ENCODE measurements at regions of chr3 and their contacts with region 1.

Region 1: GRCh38 chr3:152205097-152205593 is 63.6 kb upstream of the MBNL1 start:
- DNase-seq: peak in 5 of 9 donors; percentile 23 to 52 (median 41)
- ATAC-seq: peak; percentile 75
- H3K4me3 ChIP-seq: peak overlapping the region; percentile 65
- H3K4me3 Mint-ChIP-seq: peak overlapping the region; percentile 88 to 100 (median 94)
- H3K27ac ChIP-seq: peak overlapping the region; percentile 84
- H3K27ac Mint-ChIP-seq: peak overlapping the region; percentile 91 to 100 (median 96)
- H3K4me1 ChIP-seq: peaks cover 35 to 49% of the 10 kb centered on the region in 2 donors
- H3K4me1 Mint-ChIP-seq: peaks cover 46 to 84% (median 71%) of the 10 kb centered on the region in 7 donors
- H3K27me3 ChIP-seq: no peaks in the 10 kb centered on the region
- H3K27me3 Mint-ChIP-seq: no peaks in the 10 kb centered on the region

Region 2: GRCh38 chr3:151168269-151169094 is 1036.7 kb before region 1 on chr3:
- CTCF ChIA-PET with region 1: no interaction called
- POLR2A ChIA-PET with region 1: no interaction called
- intact Hi-C with region 1: no loop called
- DNase-seq: peak; percentile 55 to 79 (median 68)
- ATAC-seq: peak; percentile 77
- H3K4me3 ChIP-seq: no peak overlapping the region
- H3K4me3 Mint-ChIP-seq: no peak overlapping the region
- H3K27ac ChIP-seq: no peak overlapping the region
- H3K27ac Mint-ChIP-seq: peak overlapping the region in 1 of 9 donors; percentile 31
- H3K4me1 ChIP-seq: peaks cover 24 to 30% of the 10 kb centered on the region in 2 donors
- H3K4me1 Mint-ChIP-seq: peaks cover 28 to 48% (median 40%) of the 10 kb centered on the region in 7 donors
- H3K27me3 ChIP-seq: no peaks in the 10 kb centered on the region
- H3K27me3 Mint-ChIP-seq: no peaks in the 10 kb centered on the region

Region 3: DNA sequence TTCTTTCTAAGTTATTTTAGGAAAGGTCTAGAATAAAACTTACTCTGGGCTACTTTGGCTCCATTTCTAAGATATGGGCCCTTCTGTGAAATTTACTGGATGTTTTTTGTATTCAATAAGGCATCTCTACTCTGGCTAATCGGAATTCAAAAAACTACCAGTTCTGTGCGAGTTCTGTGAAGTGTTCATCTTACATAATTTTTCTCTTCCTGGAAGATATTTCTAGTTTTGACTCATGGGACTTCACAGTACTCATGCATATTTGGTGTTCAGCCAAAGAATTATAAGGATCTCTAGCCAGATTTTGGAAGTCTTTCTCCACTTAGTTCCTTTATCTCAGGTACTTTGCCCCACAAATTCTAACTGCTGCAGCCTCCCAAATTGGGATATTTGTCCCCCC is 17.2 kb after region 1 on chr3:
- CTCF ChIA-PET with region 1: interaction called, 7 read pairs
- POLR2A ChIA-PET with region 1: interaction called, 166 read pairs
- intact Hi-C with region 1: loop called (anchors 1 to 2 kb)
- DNase-seq: peak in 1 of 9 donors; percentile 14
- ATAC-seq: peak; percentile 57
- H3K4me3 ChIP-seq: peak overlapping the region; percentile 3
- H3K4me3 Mint-ChIP-seq: peak overlapping the region; percentile 48 to 86 (median 74)
- H3K27ac ChIP-seq: peak overlapping the region; percentile 67
- H3K27ac Mint-ChIP-seq: peak overlapping the region; percentile 65 to 99 (median 92)
- H3K4me1 ChIP-seq: peaks cover 4 to 46% of the 10 kb centered on the region in 2 donors
- H3K4me1 Mint-ChIP-seq: peaks cover 49 to 80% (median 71%) of the 10 kb centered on the region in 7 donors
- H3K27me3 ChIP-seq: no peaks in the 10 kb centered on the region
- H3K27me3 Mint-ChIP-seq: no peaks in the 10 kb centered on the region

Region 4: GRCh38 chr3:152229692-152230091 is 24.5 kb after region 1 on chr3:
- CTCF ChIA-PET with region 1: interaction called, 6 read pairs
- POLR2A ChIA-PET with region 1: interaction called, 22 read pairs
- intact Hi-C with region 1: no loop called
- DNase-seq: no peak
- ATAC-seq: no peak
- H3K4me3 ChIP-seq: no peak overlapping the region
- H3K4me3 Mint-ChIP-seq: peak overlapping the region in 4 of 10 donors; percentile 4 to 73 (median 34)
- H3K27ac ChIP-seq: no peak overlapping the region
- H3K27ac Mint-ChIP-seq: peak overlapping the region in 5 of 9 donors; percentile 1 to 75 (median 36)
- H3K4me1 ChIP-seq: peaks cover 4 to 32% of the 10 kb centered on the region in 2 donors
- H3K4me1 Mint-ChIP-seq: peaks cover 30 to 83% (median 71%) of the 10 kb centered on the region in 7 donors
- H3K27me3 ChIP-seq: no peaks in the 10 kb centered on the region
- H3K27me3 Mint-ChIP-seq: no peaks in the 10 kb centered on the region

Region 5: DNA sequence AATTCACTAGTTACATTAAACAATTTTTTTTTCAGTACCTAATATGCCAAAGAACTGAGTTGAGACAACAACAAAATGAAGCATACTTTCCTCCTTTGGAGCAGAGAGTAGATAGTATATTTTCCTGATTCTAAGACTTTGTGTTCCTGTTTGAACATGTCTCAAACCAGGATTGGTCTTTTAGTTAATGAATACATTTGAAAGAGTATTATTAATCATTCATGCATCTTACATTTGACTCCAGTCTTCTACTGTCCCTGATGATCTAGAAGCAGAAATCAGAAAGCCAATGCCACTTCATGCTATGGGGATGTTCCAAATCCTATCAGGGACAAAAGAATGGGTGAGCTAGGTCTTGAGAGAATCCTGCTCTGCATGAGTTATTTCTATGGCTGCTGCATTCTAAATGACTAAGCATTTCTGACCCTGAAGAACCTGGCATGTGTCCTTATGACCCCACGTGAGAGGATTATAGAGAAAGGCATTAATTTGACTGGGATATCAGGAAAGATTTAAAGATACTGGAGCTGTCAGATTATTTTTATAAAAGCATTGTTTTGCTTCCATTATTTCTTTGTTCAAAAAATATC is 30.7 kb after region 1 on chr3:
- CTCF ChIA-PET with region 1: interaction called, 4 read pairs
- POLR2A ChIA-PET with region 1: interaction called, 33 read pairs
- intact Hi-C with region 1: loop called in 1 of 2 experiments (anchors 1 kb)
- DNase-seq: no peak
- ATAC-seq: no peak
- H3K4me3 ChIP-seq: no peak overlapping the region
- H3K4me3 Mint-ChIP-seq: peak overlapping the region in 8 of 10 donors; percentile 7 to 65 (median 56)
- H3K27ac ChIP-seq: peak overlapping the region; percentile 29
- H3K27ac Mint-ChIP-seq: peak overlapping the region in 8 of 9 donors; percentile 74 to 90 (median 85)
- H3K4me1 ChIP-seq: peaks cover 13 to 64% of the 10 kb centered on the region in 2 donors
- H3K4me1 Mint-ChIP-seq: peaks cover 31 to 97% (median 91%) of the 10 kb centered on the region in 7 donors
- H3K27me3 ChIP-seq: no peaks in the 10 kb centered on the region
- H3K27me3 Mint-ChIP-seq: no peaks in the 10 kb centered on the region

Region 6: GRCh38 chr3:152258448-152259393 is 53.6 kb after region 1 on chr3:
- CTCF ChIA-PET with region 1: interaction called, 8 read pairs
- POLR2A ChIA-PET with region 1: interaction called, 168 read pairs
- intact Hi-C with region 1: loop called in 1 of 2 experiments (anchors 1 kb)
- DNase-seq: peak in 6 of 9 donors; percentile 34 to 90 (median 52)
- ATAC-seq: peak; percentile 87
- H3K4me3 ChIP-seq: peak overlapping the region; percentile 3
- H3K4me3 Mint-ChIP-seq: peak overlapping the region; percentile 71 to 87 (median 81)
- H3K27ac ChIP-seq: peak overlapping the region; percentile 83
- H3K27ac Mint-ChIP-seq: peak overlapping the region; percentile 83 to 99 (median 95)
- H3K4me1 ChIP-seq: peaks cover 72 to 78% of the 10 kb centered on the region in 2 donors
- H3K4me1 Mint-ChIP-seq: peaks cover 68 to 98% (median 90%) of the 10 kb centered on the region in 7 donors
- H3K27me3 ChIP-seq: no peaks in the 10 kb centered on the region
- H3K27me3 Mint-ChIP-seq: no peaks in the 10 kb centered on the region